GM12878 (cell line): ENCODE measurements at regions of chr7 and their contacts with region 1.

Region 1: DNA sequence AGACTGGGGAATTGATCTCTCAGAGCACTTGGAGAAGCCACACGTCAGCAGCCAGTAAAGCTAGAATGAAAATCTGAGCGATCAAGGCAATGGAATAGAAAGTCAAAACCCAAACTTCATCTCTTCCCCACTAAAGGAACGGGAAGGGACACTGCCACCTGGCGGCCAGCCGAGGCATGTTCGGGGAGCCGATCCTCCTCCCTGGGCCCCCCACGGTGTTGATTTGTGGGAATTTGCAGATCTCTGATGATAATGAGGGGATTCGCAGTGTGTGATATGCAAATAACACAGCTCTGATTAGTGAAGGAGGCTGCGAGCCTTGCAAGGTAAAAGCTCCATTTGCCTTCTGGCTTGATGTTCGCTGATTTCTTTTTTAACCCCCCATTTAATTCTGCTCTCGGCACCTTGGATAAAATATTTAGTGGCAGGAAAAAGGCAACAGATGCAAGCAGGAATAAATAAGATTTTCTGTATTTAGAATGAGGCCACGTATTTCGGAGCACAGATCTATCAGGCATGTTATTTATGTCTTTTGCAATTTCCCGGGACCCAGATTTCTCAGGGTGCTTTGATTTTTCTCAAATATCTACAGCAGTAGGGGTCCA is 258.6 kb downstream of the PAXIP1 start:
- DNase-seq: no peak
- ATAC-seq: peak; percentile 77
- H3K4me3 ChIP-seq: no peak overlapping the region
- H3K27ac ChIP-seq: no peak overlapping the region
- H3K4me1 ChIP-seq: no peaks in the 10 kb centered on the region
- H3K27me3 ChIP-seq: no peaks in the 10 kb centered on the region
- CTCF ChIP-seq: peak; percentile 67 to 85 (median 83)
- EP300 ChIP-seq: no peak
- POLR2A ChIP-seq: no peak
- RAD21 ChIP-seq: peak; percentile 40; the same call in 1 of the 2 replicates

Region 2: DNA sequence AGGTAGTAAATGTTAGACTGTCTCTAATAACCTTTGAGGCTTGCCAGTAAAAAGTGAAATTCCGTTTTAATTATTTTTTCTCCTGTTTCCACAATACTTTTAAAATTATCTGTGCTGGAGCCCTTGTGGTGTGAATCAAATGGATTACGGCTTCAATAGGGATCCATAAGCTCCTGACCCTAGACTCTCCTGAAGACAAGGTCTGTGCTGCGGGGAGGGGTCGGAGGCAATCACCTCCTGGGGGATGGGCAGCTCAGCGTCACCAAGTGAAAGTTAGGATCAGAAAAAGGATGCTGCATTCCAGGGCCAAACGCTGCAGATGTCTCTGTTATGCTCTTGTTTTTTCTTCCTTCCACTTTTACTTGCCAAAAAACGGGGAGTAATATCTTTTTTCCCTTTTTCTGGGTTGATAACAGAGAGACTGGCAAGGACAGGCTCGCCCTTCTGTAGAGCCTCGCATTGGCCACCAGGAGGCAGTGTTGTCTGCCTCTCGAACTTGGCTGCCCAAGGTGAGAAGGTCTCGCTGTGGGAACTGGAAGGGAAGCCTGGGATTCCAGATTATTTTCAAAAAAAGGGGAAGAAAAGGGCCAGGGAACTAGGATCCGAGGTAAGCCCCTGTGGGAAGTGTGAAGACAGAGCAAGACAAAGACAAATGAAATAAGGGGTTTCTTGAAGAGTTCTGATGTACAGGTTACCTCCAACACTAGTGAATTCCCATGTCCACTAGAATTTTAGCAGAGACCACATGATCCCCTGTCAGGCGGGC is 1362.9 kb before region 1 on chr7:
- CTCF ChIA-PET with region 1: no interaction called
- POLR2A ChIA-PET with region 1: no interaction called
- RAD21 ChIA-PET with region 1: no interaction called
- SMC1A ChIA-PET with region 1: no interaction called
- in situ Hi-C with region 1: no loop called
- intact Hi-C with region 1: loop called (anchors 10 kb)
- DNase-seq: no peak
- ATAC-seq: peak; percentile 66; the same call in 2 of the 3 replicates
- H3K4me3 ChIP-seq: no peak overlapping the region
- H3K27ac ChIP-seq: no peak overlapping the region
- H3K4me1 ChIP-seq: no peaks in the 10 kb centered on the region
- H3K27me3 ChIP-seq: no peaks in the 10 kb centered on the region
- CTCF ChIP-seq: peak; percentile 47 to 67 (median 67); a peak in 5 of 6 replicates
- EP300 ChIP-seq: no peak
- POLR2A ChIP-seq: no peak
- RAD21 ChIP-seq: peak; percentile 77

Region 3: DNA sequence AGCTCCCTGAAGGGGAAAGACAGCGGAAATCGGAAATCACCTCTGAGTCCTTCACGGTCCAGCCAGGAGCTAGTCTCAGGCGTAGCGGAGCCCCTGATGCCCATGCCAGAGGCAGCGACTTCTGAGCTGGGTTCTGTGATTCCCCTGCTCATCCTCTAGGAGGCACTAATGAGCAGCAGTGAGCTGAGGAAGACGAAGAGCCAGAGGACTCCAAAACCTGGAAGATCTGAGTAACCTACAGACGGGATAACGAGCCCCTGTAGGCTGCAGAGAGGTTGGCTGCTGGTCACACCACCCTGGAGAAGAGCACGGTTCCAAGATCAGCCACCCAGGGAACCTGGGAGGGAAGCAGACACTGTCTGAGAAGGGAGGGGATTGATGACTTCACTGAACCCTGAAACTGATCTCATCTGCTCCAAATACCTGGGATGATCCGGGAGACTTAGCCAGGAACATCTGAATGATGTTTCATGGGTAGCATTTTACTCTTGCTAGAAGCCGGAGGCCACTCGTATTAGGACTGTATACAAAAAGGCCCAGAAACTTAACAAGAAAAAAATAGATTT is 45.5 kb before region 1 on chr7:
- CTCF ChIA-PET with region 1: no interaction called
- POLR2A ChIA-PET with region 1: no interaction called
- RAD21 ChIA-PET with region 1: no interaction called
- SMC1A ChIA-PET with region 1: no interaction called
- in situ Hi-C with region 1: no loop called
- intact Hi-C with region 1: loop called (anchors 2 kb)
- DNase-seq: no peak
- ATAC-seq: no peak
- H3K4me3 ChIP-seq: no peak overlapping the region
- H3K27ac ChIP-seq: no peak overlapping the region
- H3K4me1 ChIP-seq: no peaks in the 10 kb centered on the region
- H3K27me3 ChIP-seq: no peaks in the 10 kb centered on the region
- CTCF ChIP-seq: peak; percentile 12 to 40 (median 37); a peak in 3 of 6 replicates
- EP300 ChIP-seq: no peak
- POLR2A ChIP-seq: no peak
- RAD21 ChIP-seq: no peak